Activated naive CD4-positive, alpha-beta T cell treated with anti-CD3 and anti-CD28 coated beads for 36 hours (primary cell): ENCODE measurements at regions of chr6 and their contacts with region 1.

Region 1: GRCh38 chr6:130020907-130021629 is 2.7 kb downstream of the L3MBTL3 start:
- DNase-seq: peak; percentile 90
- H3K4me3 Mint-ChIP-seq: peak overlapping the region; percentile 92
- H3K27ac Mint-ChIP-seq: peak overlapping the region; percentile 84
- H3K4me1 Mint-ChIP-seq: peaks cover 29% of the 10 kb centered on the region
- H3K27me3 Mint-ChIP-seq: no peaks in the 10 kb centered on the region

Region 2: GRCh38 chr6:129448965-129449364 is 572.1 kb before region 1 on chr6:
- CTCF ChIA-PET with region 1: no interaction called
- intact Hi-C with region 1: loop called (anchors 2 kb)
- DNase-seq: no peak
- H3K4me3 Mint-ChIP-seq: no peak overlapping the region
- H3K27ac Mint-ChIP-seq: peak overlapping the region; percentile 37
- H3K4me1 Mint-ChIP-seq: peaks cover 80% of the 10 kb centered on the region
- H3K27me3 Mint-ChIP-seq: no peaks in the 10 kb centered on the region

Region 3: GRCh38 chr6:129646642-129647041 is 374.4 kb before region 1 on chr6:
- CTCF ChIA-PET with region 1: no interaction called
- intact Hi-C with region 1: no loop called
- DNase-seq: no peak
- H3K4me3 Mint-ChIP-seq: no peak overlapping the region
- H3K27ac Mint-ChIP-seq: no peak overlapping the region
- H3K4me1 Mint-ChIP-seq: no peaks in the 10 kb centered on the region
- H3K27me3 Mint-ChIP-seq: no peaks in the 10 kb centered on the region

Region 4: DNA sequence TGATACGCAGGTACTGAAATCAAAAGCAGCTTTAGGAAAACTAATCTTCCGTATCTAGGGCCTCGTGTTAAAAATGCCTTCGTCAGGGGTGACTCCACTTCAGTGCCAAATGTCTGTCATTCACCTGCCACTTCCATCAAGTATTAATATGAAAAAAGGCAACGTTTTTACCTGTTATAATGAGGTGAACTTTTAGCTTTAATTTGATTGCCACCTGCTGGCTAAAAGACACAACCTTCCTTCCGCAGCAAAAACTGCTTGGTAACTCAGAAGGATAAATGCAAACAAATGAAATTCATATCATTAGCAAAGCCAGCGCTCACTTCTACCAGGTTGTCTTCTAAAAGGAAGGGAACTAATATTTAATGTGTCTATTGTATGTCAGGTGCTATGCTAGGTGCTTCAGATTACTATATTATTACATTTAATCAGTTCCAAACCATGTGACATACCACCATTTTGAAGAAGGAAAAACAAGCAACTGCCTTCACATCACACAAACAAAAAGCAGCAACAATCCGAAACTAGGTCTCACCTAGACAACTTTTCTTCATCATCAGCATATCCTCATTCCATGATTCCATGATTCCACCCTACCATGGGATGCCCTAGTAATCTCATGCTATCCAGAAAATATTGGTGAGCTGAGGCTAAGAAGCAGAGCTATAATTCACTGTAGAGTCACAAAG is 290.4 kb before region 1 on chr6:
- CTCF ChIA-PET with region 1: interaction called, 5 read pairs
- intact Hi-C with region 1: loop called (anchors 1 kb)
- DNase-seq: peak; percentile 47
- H3K4me3 Mint-ChIP-seq: no peak overlapping the region
- H3K27ac Mint-ChIP-seq: no peak overlapping the region
- H3K4me1 Mint-ChIP-seq: peaks cover 10% of the 10 kb centered on the region
- H3K27me3 Mint-ChIP-seq: no peaks in the 10 kb centered on the region

Region 5: GRCh38 chr6:129774697-129775447 is 246.2 kb before region 1 on chr6:
- CTCF ChIA-PET with region 1: interaction called, 10 read pairs
- intact Hi-C with region 1: no loop called
- DNase-seq: peak; percentile 68
- H3K4me3 Mint-ChIP-seq: no peak overlapping the region
- H3K27ac Mint-ChIP-seq: no peak overlapping the region
- H3K4me1 Mint-ChIP-seq: peaks cover 3% of the 10 kb centered on the region
- H3K27me3 Mint-ChIP-seq: no peaks in the 10 kb centered on the region

Region 6: GRCh38 chr6:129936329-129937165 is 84.5 kb before region 1 on chr6:
- CTCF ChIA-PET with region 1: interaction called, 3 read pairs
- intact Hi-C with region 1: loop called (anchors 1 kb)
- DNase-seq: peak; percentile 63
- H3K4me3 Mint-ChIP-seq: no peak overlapping the region
- H3K27ac Mint-ChIP-seq: no peak overlapping the region
- H3K4me1 Mint-ChIP-seq: peaks cover 2% of the 10 kb centered on the region
- H3K27me3 Mint-ChIP-seq: peaks cover 3% of the 10 kb centered on the region

Region 7: DNA sequence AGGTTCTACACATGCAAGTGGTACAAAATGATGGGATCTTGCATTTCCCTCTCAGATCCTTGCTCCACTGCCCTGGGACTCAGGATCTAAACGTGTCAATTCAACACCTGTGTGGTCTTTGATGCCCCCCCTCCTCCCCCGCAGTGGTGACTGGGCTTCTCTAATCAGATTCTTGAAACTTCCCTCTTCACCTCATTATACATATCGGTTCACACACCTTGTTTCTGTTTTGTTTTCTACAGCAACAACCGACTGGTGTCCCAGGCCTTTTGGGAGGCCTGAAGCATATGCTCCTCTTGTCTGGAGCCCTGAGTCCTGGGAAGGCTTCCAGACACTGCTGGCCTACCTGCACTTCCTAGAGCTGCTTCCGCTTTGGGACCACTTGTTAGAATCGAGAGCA is 181.7 kb after region 1 on chr6:
- CTCF ChIA-PET with region 1: no interaction called
- intact Hi-C with region 1: no loop called
- DNase-seq: peak; percentile 71
- H3K4me3 Mint-ChIP-seq: peak overlapping the region; percentile 25
- H3K27ac Mint-ChIP-seq: no peak overlapping the region
- H3K4me1 Mint-ChIP-seq: peaks cover 41% of the 10 kb centered on the region
- H3K27me3 Mint-ChIP-seq: no peaks in the 10 kb centered on the region